ENCODE measurements at regions of chr15 and their contacts with region 1.

Region 1: DNA sequence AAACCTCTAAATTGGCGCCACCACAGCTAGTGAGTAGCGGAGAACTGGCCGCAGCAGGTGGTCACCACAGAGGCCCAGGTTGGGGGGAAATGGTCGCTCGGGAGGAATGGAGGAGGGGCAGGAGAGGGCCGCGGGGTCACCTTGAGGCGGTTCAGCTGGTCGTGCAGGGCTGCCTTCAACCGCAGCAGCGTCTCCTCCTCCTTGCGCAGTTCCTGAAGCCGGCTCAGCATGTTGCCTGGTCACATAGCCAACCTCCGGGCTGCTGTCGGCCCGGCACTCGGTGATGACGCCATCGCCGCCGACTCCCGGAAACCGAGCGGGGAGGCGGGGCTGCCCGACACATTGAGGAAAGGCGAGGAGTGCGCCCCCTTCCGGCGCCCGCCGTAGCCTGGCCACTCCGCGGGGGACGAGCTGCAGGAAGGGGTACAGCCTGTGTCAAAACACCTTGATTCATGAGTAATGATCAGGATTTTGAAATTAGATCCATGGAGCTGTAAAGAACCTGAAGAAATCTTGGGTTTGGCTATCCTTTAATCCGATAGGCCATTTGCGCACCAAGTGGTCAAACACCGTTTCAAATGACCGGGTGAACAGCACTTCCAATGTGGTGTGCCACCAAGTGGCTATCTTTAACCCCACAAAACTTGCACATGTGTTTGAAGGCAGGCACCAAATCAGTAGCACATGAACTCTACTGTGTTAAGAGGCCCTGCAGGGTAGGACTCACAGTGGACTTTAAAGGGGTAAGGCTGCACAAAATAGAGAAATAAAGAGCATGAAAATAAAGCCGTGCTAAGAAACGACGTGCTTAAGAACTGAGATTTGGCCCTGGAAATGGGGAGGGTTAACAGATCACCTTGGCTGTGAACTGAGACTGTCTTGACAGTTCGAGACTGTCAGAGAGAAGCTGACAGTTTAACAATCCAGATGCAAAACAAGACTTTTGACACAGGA is at the start of gene SNAPC5:
- DNase-seq: no peak
- H3K4me3 ChIP-seq: peak within 1 kb of the TSS; percentile 94
- CTCF ChIP-seq: peak; percentile 95

Region 2: DNA sequence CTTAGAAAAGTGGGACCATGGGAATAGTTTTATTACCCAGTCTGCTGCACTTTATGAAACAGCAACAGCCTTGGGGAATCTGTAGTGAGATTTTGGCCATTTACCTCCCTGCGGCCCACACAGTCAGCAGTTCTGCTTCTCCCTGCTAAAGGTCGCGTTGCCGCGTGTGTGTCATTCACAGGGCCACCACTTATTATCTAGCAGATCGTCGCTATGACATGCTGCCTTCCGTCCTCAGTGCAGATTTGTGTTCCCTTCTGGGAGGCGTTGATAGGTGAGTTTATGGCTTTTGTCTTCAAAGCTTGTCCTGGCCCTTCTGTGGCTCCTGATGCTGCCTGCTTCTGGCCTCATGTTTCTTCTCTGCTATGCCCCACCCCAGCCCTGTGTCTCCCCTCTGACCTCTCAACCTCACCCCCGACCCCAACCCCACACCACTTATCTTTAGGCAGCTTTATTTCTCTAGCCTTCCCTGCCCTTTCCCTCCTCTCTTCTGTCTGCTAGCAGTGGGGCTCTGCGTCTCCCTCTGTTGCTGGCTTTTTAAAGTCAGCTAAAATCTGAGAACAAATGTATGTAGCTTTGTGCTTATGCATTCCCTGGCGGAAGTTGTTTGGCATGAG is 174.4 kb before region 1 on chr15:
- CTCF ChIA-PET with region 1: interaction called, 12 read pairs
- POLR2A ChIA-PET with region 1: no interaction called
- DNase-seq: no peak
- H3K4me3 ChIP-seq: no peak overlapping the region
- CTCF ChIP-seq: no peak

Region 3: DNA sequence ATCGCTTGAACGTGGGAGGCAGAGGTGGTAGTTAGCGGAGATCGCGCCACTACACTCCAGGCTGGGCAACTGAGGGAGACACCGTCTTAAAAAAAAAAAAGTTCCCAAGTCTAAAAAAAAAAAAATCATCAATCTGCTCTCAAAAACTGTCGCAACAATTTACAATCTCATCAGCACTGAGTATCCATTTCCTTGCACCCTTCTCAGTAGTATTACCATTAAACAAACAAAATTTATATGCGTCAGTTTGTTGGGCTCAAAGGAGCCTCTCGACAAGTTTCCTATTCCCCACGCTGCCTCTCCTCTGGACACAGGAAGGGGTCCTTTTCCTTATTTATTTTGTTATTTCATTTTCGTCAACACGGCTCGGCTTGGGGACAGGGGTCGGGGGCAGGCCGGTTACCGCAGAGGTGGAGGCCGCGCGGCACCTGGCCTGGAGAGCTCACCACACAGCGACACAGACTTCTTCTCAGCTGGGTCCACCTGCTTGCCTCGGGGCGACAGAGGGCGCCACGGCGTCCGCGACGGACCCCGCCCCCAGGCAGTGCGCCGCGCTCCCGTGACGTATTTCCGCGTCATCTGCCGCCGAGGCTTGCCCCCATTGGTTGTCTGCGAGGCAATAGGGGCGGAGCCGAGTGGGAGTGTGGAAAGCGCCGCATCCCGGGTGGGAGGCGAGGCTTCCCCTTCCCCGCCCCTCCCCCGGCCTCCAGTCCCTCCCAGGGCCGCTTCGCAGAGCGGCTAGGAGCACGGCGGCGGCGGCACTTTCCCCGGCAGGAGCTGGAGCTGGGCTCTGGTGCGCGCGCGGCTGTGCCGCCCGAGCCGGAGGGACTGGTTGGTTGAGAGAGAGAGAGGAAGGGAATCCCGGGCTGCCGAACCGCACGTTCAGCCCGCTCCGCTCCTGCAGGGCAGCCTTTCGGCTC is 111.3 kb before region 1 on chr15 and contains the start of gene MAP2K1:
- CTCF ChIA-PET with region 1: interaction called, 112 read pairs
- POLR2A ChIA-PET with region 1: interaction called, 19 read pairs
- DNase-seq: peak; percentile 69
- H3K4me3 ChIP-seq: peak within 1 kb of the TSS; percentile 81
- CTCF ChIP-seq: peak; percentile 96

Region 4: DNA sequence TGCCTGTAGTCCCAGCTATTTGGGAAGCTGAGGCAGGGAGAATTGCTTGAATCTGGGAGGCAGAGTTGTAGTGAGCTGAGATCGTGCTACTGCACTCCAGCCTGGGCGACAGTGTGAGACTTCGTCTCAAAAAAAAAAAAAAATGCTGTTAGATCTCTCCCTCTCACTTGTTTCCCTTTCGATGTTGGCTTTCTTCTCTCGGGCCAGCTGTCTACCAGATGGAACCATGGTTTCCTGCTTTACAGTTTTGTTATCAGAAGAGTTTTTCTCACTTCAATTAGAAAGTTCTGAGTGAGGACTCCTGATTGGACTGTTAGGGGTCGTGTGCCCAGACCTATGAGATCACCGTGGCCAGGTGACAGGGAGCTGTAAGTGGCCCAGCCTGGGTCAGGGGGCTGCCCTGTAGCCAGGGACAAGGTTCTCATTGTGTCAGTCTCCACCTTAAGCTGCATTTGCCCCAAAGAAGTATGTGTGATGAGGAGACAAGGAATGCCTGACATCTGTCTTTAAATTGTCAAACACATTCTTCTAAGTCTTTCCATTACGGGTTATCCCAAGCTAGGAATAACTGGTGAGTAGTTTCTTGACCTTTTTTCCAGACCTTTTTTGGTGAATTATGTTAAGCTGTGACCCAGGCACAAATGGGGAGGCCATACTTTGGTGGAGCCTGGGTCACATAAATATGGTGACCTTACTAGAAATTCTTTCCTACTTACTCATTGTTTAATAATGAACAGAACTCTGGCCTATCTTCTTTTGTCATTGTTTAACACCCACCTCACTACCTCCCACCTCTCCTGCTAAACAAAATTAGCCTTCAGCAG is 25.4 kb before region 1 on chr15:
- CTCF ChIA-PET with region 1: interaction called, 29 read pairs
- POLR2A ChIA-PET with region 1: interaction called, 5 read pairs
- DNase-seq: no peak
- H3K4me3 ChIP-seq: no peak overlapping the region
- CTCF ChIP-seq: no peak

Region 5: GRCh38 chr15:66566963-66567531 is 69.3 kb after region 1 on chr15:
- CTCF ChIA-PET with region 1: interaction called, 35 read pairs
- POLR2A ChIA-PET with region 1: interaction called, 3 read pairs
- DNase-seq: no peak
- H3K4me3 ChIP-seq: no peak overlapping the region
- CTCF ChIP-seq: peak; percentile 56

Region 6: DNA sequence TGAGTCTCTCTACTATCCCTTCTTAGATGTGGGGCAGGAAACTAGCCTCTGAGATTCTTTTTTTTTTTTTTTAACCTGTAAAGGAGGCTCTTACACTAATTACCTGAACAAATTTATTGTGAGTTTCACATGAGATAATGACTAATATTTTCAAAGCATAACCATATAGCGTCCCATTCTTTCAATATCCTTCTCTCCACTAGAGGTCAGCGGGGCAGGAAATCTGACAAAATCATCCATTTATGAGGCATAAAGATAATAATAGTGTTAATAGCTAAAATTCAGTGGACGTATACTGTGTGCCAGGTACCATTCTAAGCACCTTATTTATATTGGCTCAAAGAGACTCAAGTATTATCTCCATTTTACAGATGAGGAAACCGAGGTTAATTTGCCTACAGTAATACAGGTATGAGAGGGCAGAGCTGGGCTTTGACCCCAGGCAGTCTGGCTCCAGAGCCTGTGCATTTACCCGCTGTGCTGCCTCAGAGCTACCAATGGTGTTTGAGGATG is 187.9 kb after region 1 on chr15:
- CTCF ChIA-PET with region 1: no interaction called
- POLR2A ChIA-PET with region 1: no interaction called
- DNase-seq: no peak
- H3K4me3 ChIP-seq: no peak overlapping the region
- CTCF ChIP-seq: no peak

Measured in AG04449 (cell line).